Dorsolateral prefrontal cortex (tissue), 120 donors: ENCODE measurements at regions of chr19 and their contacts with region 1.

Region 1: GRCh38 chr19:12806239-12807081 is at the start of gene RNASEH2A:
- DNase-seq: peak; percentile 84 to 96 (median 91)
- H3K4me3 ChIP-seq: peak within 1 kb of the TSS; percentile 48 to 98 (median 80)
- H3K27ac ChIP-seq: peak within 1 kb of the TSS in 57 of 59 donors; percentile 18 to 93 (median 79)
- H3K27me3 ChIP-seq: no peaks in the 10 kb centered on the region
- CTCF ChIP-seq: peak in 41 of 56 donors; percentile 5 to 60 (median 30)
- total RNA-seq, gene RNASEH2A: 1.6 to 13.4 (median 6.0) TPM

Region 2: DNA sequence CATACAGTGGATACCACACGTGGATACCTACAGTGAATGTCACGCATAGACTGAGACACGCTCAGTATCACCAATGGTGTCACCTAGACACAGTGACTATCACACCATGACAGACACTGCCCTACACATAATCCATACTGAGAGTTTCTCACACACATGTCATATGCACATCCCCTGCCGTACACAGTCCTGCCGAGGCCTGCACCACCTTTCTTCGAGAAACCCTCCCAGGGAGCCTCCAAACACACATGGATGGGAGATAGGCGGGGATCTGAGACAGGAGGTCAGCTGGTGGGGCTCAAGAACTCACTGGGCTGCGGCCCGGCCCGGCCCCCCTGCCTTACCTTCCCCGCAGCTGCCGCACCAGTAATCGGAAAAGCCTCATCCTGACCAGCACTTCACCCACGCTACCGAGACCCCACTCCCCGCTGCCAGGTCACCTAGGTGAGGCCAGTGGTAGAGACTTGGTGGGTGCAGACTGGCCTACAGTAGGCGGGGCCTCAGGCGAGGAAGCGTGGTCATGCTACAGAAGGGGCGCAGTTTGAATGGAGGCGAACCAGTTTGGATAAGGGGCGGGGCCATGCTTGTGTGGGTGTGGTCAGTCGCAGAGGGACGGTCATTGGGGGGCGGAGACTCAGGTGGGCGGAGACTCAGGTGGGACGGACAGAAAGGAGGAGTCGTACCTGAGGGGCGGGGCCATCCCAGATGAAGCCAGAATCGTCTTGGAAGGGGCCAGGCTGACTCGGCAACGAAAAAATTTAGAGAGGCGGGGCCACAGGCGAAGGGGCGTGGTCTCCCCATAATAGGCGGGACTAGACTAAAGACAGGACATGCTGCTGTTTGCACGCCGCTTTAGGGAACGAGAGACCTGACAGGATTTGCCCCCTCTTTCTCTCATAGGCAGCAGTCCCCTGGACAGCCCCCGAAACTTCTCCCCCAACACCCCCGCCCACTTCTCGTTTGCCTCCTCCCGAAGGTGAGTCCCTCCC is 33.9 kb after region 1 on chr19:
- intact Hi-C with region 1: loop called (anchors 5 kb)
- DNase-seq: peak in 7 of 10 donors; percentile 64 to 82 (median 74)
- H3K4me3 ChIP-seq: peak overlapping the region; percentile 8 to 75 (median 59)
- H3K27ac ChIP-seq: peak overlapping the region in 2 of 59 donors; percentile 29 to 46
- H3K27me3 ChIP-seq: peaks cover 0 to 59% (median 9%) of the 10 kb centered on the region in 45 donors
- CTCF ChIP-seq: no peak

Region 3: GRCh38 chr19:12847159-12848139 is 41.0 kb after region 1 on chr19:
- intact Hi-C with region 1: loop called (anchors 5 kb)
- DNase-seq: peak; percentile 73 to 91 (median 84)
- H3K4me3 ChIP-seq: peak overlapping the region in 57 of 59 donors; percentile 9 to 62 (median 42)
- H3K27ac ChIP-seq: peak overlapping the region in 38 of 59 donors; percentile 3 to 81 (median 56)
- H3K27me3 ChIP-seq: peaks cover 0 to 10% (median 0%) of the 10 kb centered on the region in 45 donors
- CTCF ChIP-seq: peak; percentile 93 to 100 (median 99)

Region 4: GRCh38 chr19:12938234-12939025 is 132.0 kb after region 1 on chr19 and contains the start of gene CALR:
- intact Hi-C with region 1: loop called in 1 of 2 experiments (anchors 10 kb)
- DNase-seq: peak; percentile 99 to 100 (median 100)
- H3K4me3 ChIP-seq: peak within 1 kb of the TSS; percentile 50 to 100 (median 99)
- H3K27ac ChIP-seq: peak within 1 kb of the TSS in 58 of 59 donors; percentile 53 to 97 (median 87)
- H3K27me3 ChIP-seq: no peaks in the 10 kb centered on the region
- CTCF ChIP-seq: peak in 17 of 56 donors; percentile 4 to 48 (median 14)
- total RNA-seq, gene CALR: 148 to 544 (median 264) TPM